ENCODE measurements at regions of chr1 and their contacts with region 1.

Region 1: GRCh38 chr1:32828341-32828740 is 10.9 kb downstream of the S100PBP start:
- DNase-seq: no peak
- ATAC-seq: no peak
- H3K4me3 ChIP-seq: no peak overlapping the region
- H3K27ac ChIP-seq: no peak overlapping the region
- H3K4me1 ChIP-seq: no peaks in the 10 kb centered on the region
- H3K27me3 ChIP-seq: no peaks in the 10 kb centered on the region

Region 2: GRCh38 chr1:32372149-32372756 is 456.1 kb before region 1 on chr1:
- intact Hi-C with region 1: no loop called
- DNase-seq: no peak
- ATAC-seq: no peak
- H3K4me3 ChIP-seq: no peak overlapping the region
- H3K27ac ChIP-seq: no peak overlapping the region
- H3K4me1 ChIP-seq: no peaks in the 10 kb centered on the region
- H3K27me3 ChIP-seq: no peaks in the 10 kb centered on the region

Region 3: DNA sequence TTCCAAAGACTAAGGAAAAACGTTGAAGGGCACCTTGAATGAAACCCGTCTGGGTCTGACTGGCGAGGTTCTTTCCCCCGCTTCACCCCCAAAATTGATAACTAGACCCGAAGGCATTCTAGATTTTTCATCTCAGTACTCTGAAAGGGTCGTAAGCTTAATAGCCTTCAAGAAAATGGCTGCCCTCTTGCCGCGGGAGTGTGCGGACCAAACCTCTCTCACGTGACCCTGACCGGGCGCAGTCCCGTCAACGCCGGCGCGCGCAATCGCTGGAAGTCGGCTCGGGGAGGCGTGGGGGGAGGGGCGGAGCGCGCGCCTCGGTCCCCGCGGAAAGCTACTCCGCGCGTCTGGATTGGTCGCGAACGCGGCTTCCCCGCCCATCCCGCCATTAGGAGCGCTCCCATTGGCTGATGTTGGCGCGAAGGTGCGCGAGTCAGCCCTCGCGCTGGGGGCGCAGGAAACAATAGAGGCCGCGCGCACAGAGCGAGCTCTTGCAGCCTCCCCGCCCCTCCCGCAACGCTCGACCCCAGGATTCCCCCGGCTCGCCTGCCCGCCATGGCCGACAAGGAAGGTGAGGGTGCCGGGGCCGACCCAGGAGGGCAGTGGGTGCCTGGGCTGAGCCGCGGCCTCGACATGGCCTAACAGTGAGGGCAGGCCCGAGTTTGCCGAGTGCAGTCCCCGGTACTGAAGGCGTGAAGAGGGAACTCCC is 177.4 kb before region 1 on chr1 and contains the start of gene RBBP4:
- intact Hi-C with region 1: no loop called
- DNase-seq: peak; percentile 99
- ATAC-seq: peak; percentile 99
- H3K4me3 ChIP-seq: peak within 1 kb of the TSS; percentile 49 to 82
- H3K27ac ChIP-seq: peak within 1 kb of the TSS; percentile 78 to 96
- H3K4me1 ChIP-seq: peaks cover 0 to 4% of the 10 kb centered on the region in 2 donors
- H3K27me3 ChIP-seq: no peaks in the 10 kb centered on the region
- total RNA-seq, gene RBBP4: 106 to 114 TPM

Region 4: GRCh38 chr1:32753532-32754312 is 74.6 kb before region 1 on chr1:
- intact Hi-C with region 1: no loop called
- DNase-seq: peak in 1 of 2 donors; percentile 85
- ATAC-seq: peak; percentile 86
- H3K4me3 ChIP-seq: peak overlapping the region; percentile 38 to 75
- H3K27ac ChIP-seq: no peak overlapping the region
- H3K4me1 ChIP-seq: no peaks in the 10 kb centered on the region
- H3K27me3 ChIP-seq: no peaks in the 10 kb centered on the region

Region 5: GRCh38 chr1:32933742-32934322 is 105.5 kb after region 1 on chr1:
- intact Hi-C with region 1: no loop called
- DNase-seq: no peak
- ATAC-seq: peak; percentile 40
- H3K4me3 ChIP-seq: no peak overlapping the region
- H3K27ac ChIP-seq: no peak overlapping the region
- H3K4me1 ChIP-seq: no peaks in the 10 kb centered on the region
- H3K27me3 ChIP-seq: no peaks in the 10 kb centered on the region

Region 6: DNA sequence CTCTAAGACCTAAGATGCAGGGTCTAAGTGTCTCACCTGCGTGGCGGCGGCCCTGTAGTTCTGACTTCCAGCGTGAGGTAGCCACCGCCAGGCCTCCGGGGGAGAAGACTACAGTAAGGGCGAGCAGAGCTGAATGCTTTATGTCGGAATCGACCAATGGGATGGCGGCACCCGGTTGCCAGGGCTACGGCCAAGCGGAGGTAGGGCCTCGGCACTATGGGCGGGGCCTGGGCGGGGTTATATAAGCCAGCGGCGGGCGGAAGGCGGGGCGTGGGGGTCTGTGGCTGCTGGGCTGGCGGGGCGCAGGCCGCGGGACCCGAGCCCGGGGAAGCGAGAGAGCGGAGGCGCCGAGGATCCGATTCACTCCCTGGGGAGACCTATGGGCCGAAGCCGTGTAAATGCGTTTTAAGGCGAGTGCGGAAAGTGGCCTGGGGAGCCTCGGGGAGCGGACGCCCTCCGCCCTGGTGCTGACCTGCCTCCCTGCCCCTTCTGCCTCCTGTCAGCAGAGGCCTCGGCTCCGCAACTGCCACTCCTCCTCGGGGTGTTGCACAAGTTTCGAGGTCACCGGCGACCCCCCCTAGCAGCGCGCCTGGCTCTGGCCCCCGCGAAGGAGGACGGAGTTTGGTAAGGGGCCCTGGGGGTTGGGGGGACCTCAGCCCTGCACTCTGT is 252.7 kb after region 1 on chr1 and contains the start of gene AZIN2:
- intact Hi-C with region 1: loop called in 1 of 2 experiments (anchors 10 kb)
- DNase-seq: peak; percentile 98 to 100
- ATAC-seq: peak; percentile 98
- H3K4me3 ChIP-seq: peak within 1 kb of the TSS; percentile 46 to 51
- H3K27ac ChIP-seq: no peak within 1 kb of the TSS
- H3K4me1 ChIP-seq: no peaks in the 10 kb centered on the region
- H3K27me3 ChIP-seq: no peaks in the 10 kb centered on the region
- total RNA-seq, gene AZIN2: 3.9 to 14.4 TPM